Left colon (tissue), 2 donors: ENCODE measurements at regions of chr1 and their contacts with region 1.

Region 1: GRCh38 chr1:983799-984473 is 2.0 kb upstream of the PERM1 start:
- DNase-seq: peak in 1 of 2 donors; percentile 61
- ATAC-seq: peak; percentile 73

Region 2: GRCh38 chr1:925532-926421 is 58.2 kb before region 1 on chr1:
- intact Hi-C with region 1: no loop called
- DNase-seq: peak in 1 of 2 donors; percentile 31
- ATAC-seq: no peak

Region 3: GRCh38 chr1:1059494-1060280 is 75.8 kb after region 1 on chr1:
- intact Hi-C with region 1: loop called in 1 of 2 experiments (anchors 10 kb)
- DNase-seq: peak; percentile 82 to 96
- ATAC-seq: peak; percentile 88

Region 4: DNA sequence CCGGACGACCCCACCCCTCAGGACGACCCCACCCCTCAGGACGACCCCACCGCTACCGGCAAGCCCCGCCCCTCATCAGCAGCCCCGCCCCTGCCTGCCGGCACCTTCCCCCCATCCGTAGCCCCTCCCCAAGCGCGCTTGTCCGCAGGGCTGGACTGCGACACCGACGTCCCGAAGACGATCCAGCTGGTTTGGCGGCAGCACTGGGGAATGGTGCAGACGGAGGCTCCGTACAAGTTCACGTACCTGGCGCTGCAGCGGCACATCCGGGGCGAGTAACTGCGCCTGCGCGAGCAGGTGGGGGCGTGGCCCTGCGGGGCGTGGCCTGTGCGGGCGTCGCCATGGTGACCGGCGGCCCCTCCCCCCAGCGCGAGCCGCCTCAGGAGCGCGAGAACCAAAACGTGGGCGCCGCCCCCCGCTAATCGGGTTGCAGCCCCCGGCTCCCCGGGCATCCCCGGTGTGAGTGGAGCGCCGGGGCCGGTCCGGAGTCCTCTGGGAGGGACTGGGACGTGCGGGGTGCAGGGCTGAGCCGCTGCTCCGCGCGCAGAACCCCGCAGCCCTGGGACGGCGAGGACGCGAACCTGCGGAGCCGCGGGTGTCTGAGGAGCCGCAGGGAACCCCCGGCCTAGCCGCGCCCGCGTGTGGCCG is 85.2 kb after region 1 on chr1:
- intact Hi-C with region 1: loop called (anchors 5 to 10 kb)
- DNase-seq: peak; percentile 84 to 92
- ATAC-seq: peak; percentile 52